ENCODE measurements at regions of chr1 and their contacts with region 1.

Region 1: DNA sequence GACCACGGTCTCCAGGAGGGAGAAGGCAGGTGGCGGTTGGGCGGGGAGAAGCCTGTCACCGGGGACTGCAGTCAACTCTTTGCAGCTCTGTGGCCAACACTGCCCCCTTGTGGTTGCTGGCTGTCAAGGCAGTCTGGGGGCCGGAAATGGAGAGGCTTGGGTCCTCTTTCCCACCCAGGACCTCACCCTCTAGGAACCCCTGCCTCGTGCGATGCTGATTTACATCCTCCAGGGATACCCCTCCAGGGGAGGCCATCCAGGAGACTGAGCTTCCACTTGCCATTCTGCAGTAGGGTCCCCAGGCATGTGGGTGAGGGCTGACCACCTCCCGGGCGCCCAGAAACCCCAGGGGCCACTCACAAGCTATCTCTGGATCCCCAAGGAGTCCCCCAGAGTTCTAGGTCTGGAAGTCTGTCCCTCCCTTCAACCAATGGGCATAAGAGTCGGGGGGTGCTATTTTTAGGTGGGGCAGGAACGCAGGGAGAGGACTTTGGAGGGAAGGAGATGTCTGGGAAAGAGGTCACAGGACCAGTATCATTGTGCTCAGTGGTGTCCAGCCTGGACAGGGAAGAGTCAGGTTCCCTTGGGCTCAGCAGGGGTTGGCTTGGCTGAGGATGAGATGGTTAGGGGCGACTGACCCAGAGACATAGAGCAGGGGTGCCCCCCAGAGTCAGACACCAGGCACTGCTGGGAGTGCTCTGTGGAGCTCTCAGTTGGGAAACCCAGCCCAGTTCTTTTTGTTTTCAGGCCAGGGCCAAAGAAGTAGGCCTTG is 7.1 kb upstream of the GPR61 start:
- DNase-seq: peak; percentile 92
- ATAC-seq: peak; percentile 88

Region 2: GRCh38 chr1:109493805-109494539 is 38.6 kb before region 1 on chr1 and contains the start of gene CYB561D1:
- intact Hi-C with region 1: loop called (anchors 2 kb)
- DNase-seq: peak; percentile 93
- ATAC-seq: peak; percentile 93
- total RNA-seq, gene CYB561D1: 7.6 TPM

Measured in sciatic nerve (tissue), 2 donors.